ENCODE measurements at regions of chr19 and their contacts with region 1.

Region 1: GRCh38 chr19:18281082-18282020 is at the start of gene JUND:
- DNase-seq: peak; percentile 96 to 98
- H3K4me3 ChIP-seq: peak within 1 kb of the TSS; percentile 94
- H3K4me3 Mint-ChIP-seq: peak within 1 kb of the TSS; percentile 93
- H3K27ac Mint-ChIP-seq: peak within 1 kb of the TSS; percentile 99
- H3K4me1 ChIP-seq: peaks cover 23% of the 10 kb centered on the region
- H3K4me1 Mint-ChIP-seq: peaks cover 21% of the 10 kb centered on the region
- H3K27me3 ChIP-seq: no peaks in the 10 kb centered on the region
- H3K27me3 Mint-ChIP-seq: peaks cover 6% of the 10 kb centered on the region
- CTCF ChIP-seq: peak in 1 of 2 experiments; percentile 16
- total RNA-seq, gene JUND: 75.5 and 78.8 TPM in 2 replicates

Region 2: DNA sequence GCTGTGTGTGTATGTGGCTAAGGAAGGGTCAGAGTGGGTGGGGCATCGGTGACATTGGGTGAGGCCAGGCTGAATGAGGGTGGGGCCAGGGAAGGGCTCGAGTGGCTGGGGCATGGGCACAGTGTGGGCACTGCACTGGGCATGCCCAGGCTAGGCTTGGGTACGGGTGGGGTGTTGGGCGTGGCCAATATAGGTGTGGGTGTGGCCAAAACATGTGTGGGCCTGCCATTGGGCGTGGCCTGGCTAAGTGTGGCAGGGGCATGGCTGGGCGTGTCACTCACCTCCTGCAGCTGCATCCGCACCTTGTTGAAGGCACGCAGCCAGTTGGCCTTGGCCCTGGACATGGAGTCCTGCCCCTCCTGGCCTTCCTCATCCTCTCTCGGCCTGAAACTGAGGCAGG is 626.4 kb before region 1 on chr19:
- CTCF ChIA-PET with region 1: no interaction called
- POLR2A ChIA-PET with region 1: no interaction called
- intact Hi-C with region 1: no loop called
- DNase-seq: no peak
- H3K4me3 ChIP-seq: no peak overlapping the region
- H3K4me3 Mint-ChIP-seq: no peak overlapping the region
- H3K27ac Mint-ChIP-seq: no peak overlapping the region
- H3K4me1 ChIP-seq: no peaks in the 10 kb centered on the region
- H3K4me1 Mint-ChIP-seq: no peaks in the 10 kb centered on the region
- H3K27me3 ChIP-seq: no peaks in the 10 kb centered on the region
- H3K27me3 Mint-ChIP-seq: peaks cover 3% of the 10 kb centered on the region
- CTCF ChIP-seq: no peak

Region 3: DNA sequence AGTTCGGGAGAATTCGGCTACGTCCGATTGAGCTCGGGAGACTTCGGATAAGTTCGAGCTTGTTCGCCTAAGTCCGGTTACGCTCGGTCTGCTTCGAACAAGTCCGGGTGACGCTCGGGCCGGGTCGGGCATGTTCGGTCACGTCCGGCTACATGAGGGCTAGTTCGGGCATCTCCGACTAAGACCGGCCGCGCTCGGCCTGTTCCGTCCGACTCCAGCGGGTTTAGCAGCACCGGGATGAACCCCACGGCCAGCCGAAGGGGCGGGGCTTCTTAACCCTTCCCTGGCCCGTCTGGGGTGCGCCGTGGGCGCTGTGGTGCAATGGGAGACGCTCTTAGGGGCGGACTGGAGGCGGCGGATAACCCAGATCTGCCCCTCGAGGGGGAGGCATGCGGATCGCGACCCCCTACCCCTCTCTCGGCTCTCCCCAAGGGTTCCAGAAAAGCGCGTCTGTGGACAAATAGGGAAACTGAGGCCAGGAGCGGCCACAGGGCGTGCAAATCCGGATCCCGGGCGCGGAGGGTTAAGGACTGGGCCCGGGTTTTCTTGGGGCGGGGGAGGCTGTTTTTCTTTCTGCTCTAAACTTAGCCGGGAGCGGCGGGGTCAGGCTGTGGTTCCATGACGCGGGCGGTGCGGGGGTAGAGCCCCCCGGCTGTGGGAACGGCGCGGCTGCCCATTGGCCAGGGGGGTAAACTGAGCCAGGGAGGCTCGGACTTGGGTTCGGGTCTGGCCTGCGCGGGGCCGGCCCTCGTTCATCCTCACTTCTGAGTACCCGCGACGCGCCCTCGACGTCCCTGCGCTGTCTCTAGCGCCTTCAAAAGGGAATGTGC is 56.6 kb before region 1 on chr19:
- CTCF ChIA-PET with region 1: interaction called, 18 read pairs
- POLR2A ChIA-PET with region 1: interaction called, 27 read pairs
- intact Hi-C with region 1: no loop called
- DNase-seq: peak; percentile 97 to 98
- H3K4me3 ChIP-seq: peak overlapping the region; percentile 79
- H3K4me3 Mint-ChIP-seq: peak overlapping the region; percentile 95
- H3K27ac Mint-ChIP-seq: peak overlapping the region; percentile 81
- H3K4me1 ChIP-seq: 0 out of 2 replicates have a peak, but pooled peaks cover 5% of the 10 kb centered on the region
- H3K4me1 Mint-ChIP-seq: peaks cover 10% of the 10 kb centered on the region
- H3K27me3 ChIP-seq: no peaks in the 10 kb centered on the region
- H3K27me3 Mint-ChIP-seq: no peaks in the 10 kb centered on the region
- CTCF ChIP-seq: no peak

Region 4: DNA sequence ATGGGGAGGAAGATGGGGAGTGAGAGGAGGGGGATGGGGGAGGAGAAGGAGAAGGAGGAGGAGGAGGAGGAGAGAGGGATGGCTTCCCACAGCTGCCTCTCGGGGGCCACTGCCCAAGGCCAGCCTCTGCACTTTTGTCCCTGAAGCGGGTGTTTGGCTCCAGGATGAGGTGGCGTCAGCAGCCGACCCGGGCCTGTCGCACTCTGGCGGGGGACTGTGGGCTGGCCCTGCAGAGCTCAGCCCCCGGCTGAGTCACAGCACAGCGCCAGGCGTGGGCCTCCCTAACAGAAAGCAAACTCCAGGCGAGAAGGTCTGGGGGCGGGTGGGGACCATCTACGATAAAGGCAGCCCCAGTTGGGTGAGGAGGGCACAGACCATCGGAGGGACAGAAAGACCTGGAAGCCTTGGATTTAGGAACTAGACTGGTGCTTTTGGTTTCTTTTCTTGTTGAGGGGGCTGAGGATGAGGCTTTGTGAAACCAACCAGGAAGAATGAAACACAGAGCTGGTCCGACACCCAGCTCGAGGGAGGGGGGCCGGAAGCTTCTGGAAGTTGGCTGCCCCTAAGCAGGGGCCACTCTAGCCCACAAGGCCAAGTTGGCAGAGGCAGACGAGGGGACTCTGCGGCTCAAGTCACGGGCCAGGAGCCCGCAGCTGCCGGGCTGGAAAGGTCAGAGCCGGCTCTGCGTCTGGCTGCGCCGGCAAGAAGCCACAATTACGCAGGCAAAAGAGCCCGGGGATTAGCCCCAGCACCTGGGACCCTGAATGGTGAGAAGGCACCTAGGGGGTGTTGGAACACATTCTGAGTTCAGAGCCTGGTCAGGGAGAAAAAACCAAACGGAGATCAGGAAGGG is 23.3 kb after region 1 on chr19:
- CTCF ChIA-PET with region 1: interaction called, 10 read pairs
- POLR2A ChIA-PET with region 1: interaction called, 19 read pairs
- intact Hi-C with region 1: no loop called
- DNase-seq: peak; percentile 54 to 65
- H3K4me3 ChIP-seq: no peak overlapping the region
- H3K4me3 Mint-ChIP-seq: peak overlapping the region; percentile 59
- H3K27ac Mint-ChIP-seq: peak overlapping the region; percentile 75
- H3K4me1 ChIP-seq: peaks cover 27% of the 10 kb centered on the region
- H3K4me1 Mint-ChIP-seq: peaks cover 9% of the 10 kb centered on the region
- H3K27me3 ChIP-seq: no peaks in the 10 kb centered on the region
- H3K27me3 Mint-ChIP-seq: no peaks in the 10 kb centered on the region
- CTCF ChIP-seq: no peak

Region 5: DNA sequence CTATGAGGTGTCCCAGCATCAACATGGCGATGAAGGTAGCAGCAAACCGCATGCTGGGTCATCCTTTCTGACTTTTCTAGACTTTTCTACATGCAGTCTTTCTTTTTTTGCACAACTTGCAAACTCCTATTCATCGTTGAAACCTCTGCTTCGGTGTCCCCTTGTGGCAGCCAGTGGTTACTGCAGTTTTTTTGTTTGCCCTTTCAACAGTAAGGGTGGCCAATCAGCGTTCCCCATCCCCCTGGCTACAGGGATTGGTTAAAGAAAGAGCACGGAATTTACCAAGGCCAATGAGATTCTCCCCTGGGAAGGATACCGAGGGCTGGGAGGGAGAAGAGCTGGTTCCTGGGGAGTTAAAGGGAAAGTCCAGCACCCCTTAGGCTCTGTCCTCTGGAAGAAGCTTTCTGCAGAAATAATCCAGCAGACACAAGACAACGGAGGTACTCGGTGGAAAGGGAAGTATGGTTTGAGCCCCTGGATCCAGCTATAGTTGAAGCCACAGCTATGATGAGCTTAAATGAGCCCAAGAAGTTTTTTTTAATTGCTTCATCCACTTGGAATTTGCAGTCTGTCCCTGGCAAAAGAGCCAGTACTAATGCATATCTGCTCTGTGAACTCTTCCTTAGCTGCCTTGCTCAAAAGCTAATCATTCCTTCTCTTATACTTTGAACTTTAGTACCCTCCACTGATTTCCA is 47.1 kb after region 1 on chr19:
- CTCF ChIA-PET with region 1: interaction called, 155 read pairs
- POLR2A ChIA-PET with region 1: interaction called, 120 read pairs
- intact Hi-C with region 1: loop called (anchors 1 kb)
- DNase-seq: peak; percentile 92 to 94
- H3K4me3 ChIP-seq: peak overlapping the region; percentile 35
- H3K4me3 Mint-ChIP-seq: peak overlapping the region; percentile 71
- H3K27ac Mint-ChIP-seq: peak overlapping the region; percentile 74
- H3K4me1 ChIP-seq: peaks cover 7% of the 10 kb centered on the region; the same call in 1 of the 2 replicates
- H3K4me1 Mint-ChIP-seq: peaks cover 12% of the 10 kb centered on the region
- H3K27me3 ChIP-seq: no peaks in the 10 kb centered on the region
- H3K27me3 Mint-ChIP-seq: no peaks in the 10 kb centered on the region
- CTCF ChIP-seq: peak; percentile 84 to 85

Region 6: GRCh38 chr19:18373892-18374629 is 92.7 kb after region 1 on chr19:
- CTCF ChIA-PET with region 1: no interaction called
- POLR2A ChIA-PET with region 1: interaction called, 10 read pairs
- intact Hi-C with region 1: no loop called
- DNase-seq: peak; percentile 88 to 95
- H3K4me3 ChIP-seq: no peak overlapping the region
- H3K4me3 Mint-ChIP-seq: peak overlapping the region; percentile 44
- H3K27ac Mint-ChIP-seq: peak overlapping the region; percentile 78
- H3K4me1 ChIP-seq: peaks cover 59% of the 10 kb centered on the region
- H3K4me1 Mint-ChIP-seq: peaks cover 11% of the 10 kb centered on the region
- H3K27me3 ChIP-seq: no peaks in the 10 kb centered on the region
- H3K27me3 Mint-ChIP-seq: no peaks in the 10 kb centered on the region
- CTCF ChIP-seq: no peak

Region 7: DNA sequence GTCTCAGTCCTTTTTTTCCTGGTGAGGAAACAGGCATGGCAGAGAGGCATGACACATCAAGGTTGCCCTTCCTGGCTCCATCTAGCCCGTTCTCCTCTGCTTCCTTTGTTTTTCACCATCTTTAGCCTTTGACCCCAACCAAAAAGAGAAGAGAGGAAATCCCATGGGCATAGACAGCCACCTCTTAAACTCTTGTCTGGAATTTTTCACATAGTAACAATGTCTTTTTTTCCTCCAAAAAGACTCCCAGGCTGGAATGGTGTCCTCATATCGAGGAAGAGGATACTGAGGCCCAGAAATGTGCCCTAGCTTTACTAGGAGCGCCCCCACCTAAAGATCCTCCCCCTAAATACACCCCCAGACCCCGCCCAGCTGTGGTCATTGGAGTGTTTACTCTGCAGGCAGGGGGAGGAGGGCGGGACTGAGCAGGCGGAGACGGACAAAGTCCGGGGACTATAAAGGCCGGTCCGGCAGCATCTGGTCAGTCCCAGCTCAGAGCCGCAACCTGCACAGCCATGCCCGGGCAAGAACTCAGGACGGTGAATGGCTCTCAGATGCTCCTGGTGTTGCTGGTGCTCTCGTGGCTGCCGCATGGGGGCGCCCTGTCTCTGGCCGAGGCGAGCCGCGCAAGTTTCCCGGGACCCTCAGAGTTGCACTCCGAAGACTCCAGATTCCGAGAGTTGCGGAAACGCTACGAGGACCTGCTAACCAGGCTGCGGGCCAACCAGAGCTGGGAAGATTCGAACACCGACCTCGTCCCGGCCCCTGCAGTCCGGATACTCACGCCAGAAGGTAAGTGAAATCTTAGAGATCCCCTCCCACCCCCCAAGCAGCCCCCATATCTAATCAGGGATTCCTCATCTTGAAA is 104.6 kb after region 1 on chr19 and contains the start of gene GDF15:
- CTCF ChIA-PET with region 1: interaction called, 6 read pairs
- POLR2A ChIA-PET with region 1: interaction called, 16 read pairs
- intact Hi-C with region 1: no loop called
- DNase-seq: peak; percentile 97
- H3K4me3 ChIP-seq: peak within 1 kb of the TSS; percentile 76
- H3K4me3 Mint-ChIP-seq: peak within 1 kb of the TSS; percentile 85
- H3K27ac Mint-ChIP-seq: peak within 1 kb of the TSS; percentile 92
- H3K4me1 ChIP-seq: peaks cover 45% of the 10 kb centered on the region
- H3K4me1 Mint-ChIP-seq: peaks cover 6% of the 10 kb centered on the region
- H3K27me3 ChIP-seq: no peaks in the 10 kb centered on the region
- H3K27me3 Mint-ChIP-seq: no peaks in the 10 kb centered on the region
- CTCF ChIP-seq: peak; percentile 76 to 78
- total RNA-seq, gene GDF15: 55.3 and 56.1 TPM in 2 replicates

Measured in Caco-2 (cell line).